K562 (cell line): ENCODE measurements at regions of chr10 and their contacts with region 1.

Region 1: GRCh38 chr10:101067356-101068083 is 5.7 kb downstream of the KAZALD1 start:
- DNase-seq: peak; percentile 55 to 88 (median 62)
- ATAC-seq: peak; percentile 33
- H3K4me3 ChIP-seq: peak overlapping the region; percentile 58
- H3K27ac ChIP-seq: peak overlapping the region; percentile 54; the same call in 2 of the 3 replicates
- H3K4me1 ChIP-seq: peaks cover 52 to 64% of the 10 kb centered on the region in 2 experiments
- H3K27me3 ChIP-seq: no peaks in the 10 kb centered on the region
- CTCF ChIP-seq: peak; percentile 72 to 94 (median 91)
- EP300 ChIP-seq: no peak
- POLR2A ChIP-seq: no peak
- RAD21 ChIP-seq: peak; percentile 72 to 80

Region 2: DNA sequence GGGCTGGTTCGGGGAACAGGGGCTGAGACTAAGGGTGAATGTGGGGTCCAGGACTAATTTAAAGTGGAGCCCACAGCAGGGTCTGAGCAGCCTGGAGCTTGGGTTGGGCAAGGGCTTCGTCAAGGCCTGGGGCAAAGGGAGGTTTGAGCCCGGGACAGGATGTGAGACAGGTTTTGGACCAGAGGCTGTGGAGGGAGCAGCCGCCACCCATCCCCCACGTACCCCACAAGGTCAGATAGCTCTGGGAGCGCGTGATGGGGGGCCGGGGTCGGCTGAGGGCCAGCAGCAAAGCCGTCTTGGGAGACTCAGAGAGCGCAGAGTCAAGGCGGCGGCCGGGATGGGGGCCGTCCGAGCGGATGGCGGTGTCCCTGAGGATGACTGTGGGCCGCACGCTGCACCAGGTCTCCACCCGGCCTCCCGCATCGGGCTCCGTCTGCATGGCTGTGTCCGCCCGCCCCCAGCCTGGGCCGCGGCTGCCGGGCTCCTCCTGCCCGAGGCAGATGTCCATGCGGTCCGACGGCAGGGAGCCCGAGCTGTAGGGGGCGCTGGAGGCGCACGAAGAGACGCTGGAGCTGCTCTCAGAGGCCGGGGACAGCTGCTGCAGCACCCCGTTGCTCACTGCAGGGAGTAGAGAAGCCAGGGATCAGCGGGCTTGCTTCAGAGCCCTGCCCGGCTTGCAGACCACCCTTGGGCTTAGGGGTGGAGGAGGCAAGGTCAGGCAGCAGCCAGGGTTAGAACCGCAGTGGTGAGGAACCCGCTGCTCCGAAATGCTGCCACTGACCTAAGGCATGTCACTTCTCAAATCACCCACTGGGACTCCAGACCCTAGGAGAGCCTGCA is 48.7 kb before region 1 on chr10:
- CTCF ChIA-PET with region 1: interaction called, 18 read pairs
- POLR2A ChIA-PET with region 1: interaction called, 4 read pairs
- in situ Hi-C with region 1: no loop called
- intact Hi-C with region 1: loop called (anchors 10 kb)
- DNase-seq: peak; percentile 76 to 87 (median 82)
- ATAC-seq: peak; percentile 97
- H3K4me3 ChIP-seq: no peak overlapping the region
- H3K27ac ChIP-seq: no peak overlapping the region
- H3K4me1 ChIP-seq: peaks cover 0 to 13% of the 10 kb centered on the region in 2 experiments; a peak in 3 of 5 replicates
- H3K27me3 ChIP-seq: no peaks in the 10 kb centered on the region
- CTCF ChIP-seq: peak; percentile 73 to 92 (median 78)
- EP300 ChIP-seq: no peak
- POLR2A ChIP-seq: no peak
- RAD21 ChIP-seq: peak; percentile 66 to 75

Region 3: GRCh38 chr10:101031128-101031795 is 36.3 kb before region 1 on chr10 and contains the starts of genes PDZD7 and SFXN3:
- CTCF ChIA-PET with region 1: no interaction called
- POLR2A ChIA-PET with region 1: no interaction called
- in situ Hi-C with region 1: no loop called
- intact Hi-C with region 1: loop called (anchors 5 kb)
- DNase-seq: peak; percentile 88 to 97 (median 96)
- ATAC-seq: peak; percentile 98
- H3K4me3 ChIP-seq: peak within 1 kb of the TSS; percentile 21
- H3K27ac ChIP-seq: no peak within 1 kb of the TSS
- H3K4me1 ChIP-seq: peaks cover 12 to 45% of the 10 kb centered on the region in 2 experiments
- H3K27me3 ChIP-seq: peaks cover 2 to 4% of the 10 kb centered on the region in 2 experiments; a peak in 4 of 5 replicates
- CTCF ChIP-seq: no peak
- EP300 ChIP-seq: no peak
- POLR2A ChIP-seq: no peak
- RAD21 ChIP-seq: no peak
- polyA plus RNA-seq, gene PDZD7: not detected
- polyA plus RNA-seq, gene SFXN3: 0.24 to 0.31 TPM

Region 4: DNA sequence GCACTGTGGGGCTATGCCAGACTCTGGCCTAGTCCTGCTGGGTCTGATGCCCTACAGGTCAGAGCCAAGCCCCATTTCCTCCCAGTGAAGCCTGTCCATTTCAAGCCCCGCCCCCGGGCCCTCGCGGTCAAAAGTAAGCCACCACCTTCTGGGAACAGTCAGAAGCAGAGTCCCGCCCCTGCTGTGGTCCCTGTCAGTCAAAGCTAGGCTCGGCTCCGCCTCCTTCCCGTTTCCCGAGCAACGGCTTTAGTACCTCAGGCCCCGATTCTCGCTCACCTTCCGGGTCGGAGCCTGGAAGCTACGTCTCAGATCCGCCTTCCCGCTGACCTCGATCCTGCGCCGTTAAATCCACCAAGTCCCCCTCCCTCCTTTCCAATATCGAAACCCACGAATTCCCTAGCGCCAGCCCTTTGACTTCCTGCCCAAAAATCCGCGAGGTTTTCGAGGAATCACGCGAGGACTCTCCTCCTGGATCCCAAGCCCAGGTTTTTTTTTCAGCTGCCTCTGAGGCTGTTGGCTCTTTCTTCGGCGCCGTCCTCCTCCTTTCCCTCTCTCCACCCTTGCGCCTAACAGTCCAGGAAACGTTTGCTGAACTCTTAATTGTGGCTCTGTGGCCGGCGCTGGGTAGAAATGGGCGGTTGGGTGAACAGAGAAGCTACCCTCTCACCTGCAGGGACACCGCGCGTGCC is 24.7 kb before region 1 on chr10:
- CTCF ChIA-PET with region 1: interaction called, 37 read pairs
- POLR2A ChIA-PET with region 1: interaction called, 7 read pairs
- in situ Hi-C with region 1: no loop called
- intact Hi-C with region 1: loop called (anchors 2 kb)
- DNase-seq: peak; percentile 89 to 96 (median 92)
- ATAC-seq: peak; percentile 98
- H3K4me3 ChIP-seq: peak overlapping the region; percentile 44
- H3K27ac ChIP-seq: peak overlapping the region; percentile 80
- H3K4me1 ChIP-seq: peaks cover 13 to 21% of the 10 kb centered on the region in 2 experiments
- H3K27me3 ChIP-seq: no peaks in the 10 kb centered on the region
- CTCF ChIP-seq: no peak
- EP300 ChIP-seq: no peak
- POLR2A ChIP-seq: peak; percentile 82
- RAD21 ChIP-seq: no peak

Region 5: DNA sequence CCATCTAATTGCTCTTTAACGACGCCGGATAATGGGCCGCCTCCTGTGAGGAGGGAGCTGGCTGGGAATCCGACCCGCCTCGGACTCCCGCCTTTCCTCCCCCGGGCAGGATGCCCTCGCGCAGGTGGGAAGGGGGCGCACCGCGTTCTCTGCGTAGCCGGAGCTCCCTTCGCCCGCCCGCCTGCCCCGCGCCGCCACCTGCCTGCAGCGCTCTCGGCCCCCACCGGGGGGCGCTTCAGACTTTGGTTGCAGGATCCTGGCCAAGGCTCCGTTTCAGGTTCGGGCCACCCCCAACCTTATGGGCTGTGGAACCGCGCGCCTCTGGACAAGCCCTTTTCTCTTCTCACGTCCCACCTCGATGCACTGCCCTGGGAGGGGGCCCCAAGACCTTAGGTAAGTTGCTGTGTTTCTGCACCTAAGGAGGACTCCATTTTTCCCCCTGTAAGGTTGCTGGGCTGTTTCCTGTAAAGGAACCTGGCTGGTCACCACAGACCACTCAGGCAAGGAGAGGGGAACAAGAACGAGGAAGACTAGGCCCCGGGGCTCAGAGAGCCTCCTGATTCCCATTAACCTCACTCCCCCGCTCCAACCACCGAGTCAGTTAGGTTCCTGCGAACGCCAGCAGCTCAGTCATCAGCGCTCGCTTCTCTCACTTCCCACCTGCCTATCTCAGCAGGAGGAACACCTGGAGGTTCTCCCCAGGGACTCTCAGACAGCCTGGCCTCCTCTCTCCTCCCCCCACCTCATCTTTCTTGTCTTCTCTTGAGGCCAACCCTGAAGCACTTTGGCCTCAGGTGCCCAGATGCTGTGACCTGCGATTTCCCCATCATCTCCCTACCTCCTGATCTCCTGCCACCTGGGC is 17.1 kb before region 1 on chr10:
- CTCF ChIA-PET with region 1: interaction called, 20 read pairs
- POLR2A ChIA-PET with region 1: interaction called, 4 read pairs
- in situ Hi-C with region 1: no loop called
- intact Hi-C with region 1: no loop called
- DNase-seq: peak; percentile 75 to 82 (median 78)
- ATAC-seq: peak; percentile 97
- H3K4me3 ChIP-seq: no peak overlapping the region
- H3K27ac ChIP-seq: no peak overlapping the region
- H3K4me1 ChIP-seq: peaks cover 8 to 25% of the 10 kb centered on the region in 2 experiments; a peak in 4 of 5 replicates
- H3K27me3 ChIP-seq: no peaks in the 10 kb centered on the region
- CTCF ChIP-seq: peak; percentile 71 to 89 (median 80); a peak in 5 of 6 replicates
- EP300 ChIP-seq: no peak
- POLR2A ChIP-seq: no peak
- RAD21 ChIP-seq: peak; percentile 46 to 67